ENCODE measurements at regions of chr1 and their contacts with region 1.

Region 1: GRCh38 chr1:14083706-14084105 is 383.7 kb downstream of the PRDM2 start:
- DNase-seq: no peak
- H3K4me3 ChIP-seq: no peak overlapping the region
- H3K27ac ChIP-seq: no peak overlapping the region
- H3K4me1 ChIP-seq: no peaks in the 10 kb centered on the region
- H3K27me3 ChIP-seq: no peaks in the 10 kb centered on the region
- CTCF ChIP-seq: no peak

Region 2: GRCh38 chr1:13766592-13767564 is 316.8 kb before region 1 on chr1:
- CTCF ChIA-PET with region 1: no interaction called
- POLR2A ChIA-PET with region 1: no interaction called
- intact Hi-C with region 1: no loop called
- DNase-seq: peak in 1 of 2 experiments; percentile 38
- H3K4me3 ChIP-seq: no peak overlapping the region
- H3K27ac ChIP-seq: no peak overlapping the region
- H3K4me1 ChIP-seq: no peaks in the 10 kb centered on the region
- H3K27me3 ChIP-seq: no peaks in the 10 kb centered on the region
- CTCF ChIP-seq: no peak

Region 3: DNA sequence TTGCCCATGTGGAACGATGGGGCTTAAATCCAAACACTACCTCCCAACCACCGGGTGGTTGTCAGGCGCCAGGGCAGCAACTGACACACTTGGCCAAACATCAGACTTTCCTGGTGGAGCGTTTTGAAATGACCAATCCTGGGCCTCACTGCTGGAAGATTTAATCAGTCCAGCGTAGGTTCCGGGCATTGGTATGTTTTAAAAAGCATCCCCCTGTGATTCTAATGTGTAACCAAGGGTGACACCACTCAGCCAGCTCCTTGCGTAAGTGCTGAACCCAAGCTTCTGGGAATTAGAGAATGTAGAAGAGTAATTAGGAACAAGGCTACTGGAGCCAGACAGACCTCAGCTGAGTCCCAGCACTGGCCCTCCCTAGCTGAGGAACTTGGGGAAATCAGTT is 470.0 kb after region 1 on chr1:
- CTCF ChIA-PET with region 1: no interaction called
- POLR2A ChIA-PET with region 1: no interaction called
- intact Hi-C with region 1: loop called (anchors 5 kb)
- DNase-seq: no peak
- H3K4me3 ChIP-seq: no peak overlapping the region
- H3K27ac ChIP-seq: no peak overlapping the region
- H3K4me1 ChIP-seq: no peaks in the 10 kb centered on the region
- H3K27me3 ChIP-seq: peaks cover 24% of the 10 kb centered on the region; the same call in 1 of the 2 replicates
- CTCF ChIP-seq: no peak

Measured in PC-9 (cell line).